Right ventricle myocardium inferior (tissue), 1 donor: ENCODE measurements at regions of chr4 and their contacts with region 1.

Region 1: GRCh38 chr4:119559044-119559647 is 69.5 kb downstream of the PDE5A start:
- DNase-seq: no peak
- ATAC-seq: no peak

Region 2: DNA sequence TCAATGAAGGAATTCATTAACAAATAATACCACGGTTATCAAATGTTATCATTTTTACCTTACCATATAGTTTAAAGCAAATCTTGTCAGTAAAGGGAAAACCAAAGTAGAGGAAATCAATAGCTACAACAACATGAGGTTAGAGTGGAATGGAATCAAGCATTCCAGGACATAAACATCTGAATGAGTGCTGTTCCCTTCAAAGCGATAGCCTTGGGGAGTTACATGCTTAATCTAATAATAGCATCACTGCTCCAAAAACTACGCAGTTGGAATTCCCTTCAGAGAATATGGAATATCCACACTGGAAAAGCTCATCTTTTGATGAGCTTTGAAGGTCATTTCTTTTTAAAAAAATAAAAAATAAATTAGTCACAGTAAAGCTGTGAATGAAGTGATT is 38.2 kb after region 1 on chr4:
- intact Hi-C with region 1: no loop called
- DNase-seq: no peak
- ATAC-seq: no peak

Region 3: GRCh38 chr4:119628308-119629141 is 69.4 kb after region 1 on chr4 and contains the start of gene PDE5A:
- intact Hi-C with region 1: loop called (anchors 2 kb)
- DNase-seq: peak; percentile 88
- ATAC-seq: peak; percentile 87
- total RNA-seq, gene PDE5A: 7.4 TPM